ENCODE measurements at regions of chr17 and their contacts with region 1.

Region 1: DNA sequence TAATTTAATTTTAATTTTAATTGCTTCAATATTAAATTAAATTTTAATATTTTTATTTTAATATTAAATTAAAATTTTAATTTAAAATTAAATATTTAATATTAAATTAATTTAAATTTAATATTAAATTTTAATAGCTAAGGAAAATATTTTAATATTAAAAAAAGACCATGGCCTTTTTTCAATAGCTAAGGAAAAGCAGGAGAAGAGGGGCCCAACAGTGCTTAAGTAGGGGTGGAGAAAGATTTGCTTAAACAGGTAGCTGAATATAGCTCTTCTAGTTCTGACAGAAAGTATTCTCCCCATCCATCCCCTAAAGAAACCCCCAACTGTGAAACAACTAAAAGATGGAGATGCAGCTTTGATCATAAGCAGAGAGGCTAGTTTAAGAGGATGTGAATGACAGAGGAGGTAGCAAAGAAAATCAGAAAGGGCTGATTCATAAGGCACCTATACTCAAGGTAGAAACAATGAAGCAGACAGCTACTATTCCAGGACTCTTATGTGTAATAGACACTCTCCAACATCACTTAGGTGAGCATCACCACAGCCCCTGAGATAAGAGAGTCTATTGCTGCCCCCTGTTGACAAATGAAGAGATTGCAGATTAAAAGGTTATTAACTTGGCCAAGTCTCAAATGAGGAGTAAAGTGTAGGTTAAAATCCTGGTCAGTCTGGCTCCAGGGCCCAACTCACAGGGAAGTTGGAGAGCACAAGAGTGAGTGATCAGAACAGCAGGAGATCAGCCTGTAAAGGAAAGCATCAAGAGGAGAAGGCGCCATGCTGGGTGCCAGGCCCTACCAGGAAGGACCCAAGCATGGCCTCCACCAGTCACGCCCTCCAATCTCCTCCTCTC is 7.8 kb upstream of the RNASEK start:
- DNase-seq: peak; percentile 45
- H3K4me3 Mint-ChIP-seq: no peak overlapping the region
- H3K27ac Mint-ChIP-seq: no peak overlapping the region
- H3K4me1 Mint-ChIP-seq: no peaks in the 10 kb centered on the region
- H3K27me3 Mint-ChIP-seq: no peaks in the 10 kb centered on the region
- CTCF ChIP-seq: peak; percentile 42

Region 2: GRCh38 chr17:6812295-6812694 is 192.3 kb before region 1 on chr17:
- CTCF ChIA-PET with region 1: no interaction called
- intact Hi-C with region 1: no loop called
- DNase-seq: no peak
- H3K4me3 Mint-ChIP-seq: no peak overlapping the region
- H3K27ac Mint-ChIP-seq: no peak overlapping the region
- H3K4me1 Mint-ChIP-seq: no peaks in the 10 kb centered on the region
- H3K27me3 Mint-ChIP-seq: peaks cover 38% of the 10 kb centered on the region
- CTCF ChIP-seq: no peak

Region 3: DNA sequence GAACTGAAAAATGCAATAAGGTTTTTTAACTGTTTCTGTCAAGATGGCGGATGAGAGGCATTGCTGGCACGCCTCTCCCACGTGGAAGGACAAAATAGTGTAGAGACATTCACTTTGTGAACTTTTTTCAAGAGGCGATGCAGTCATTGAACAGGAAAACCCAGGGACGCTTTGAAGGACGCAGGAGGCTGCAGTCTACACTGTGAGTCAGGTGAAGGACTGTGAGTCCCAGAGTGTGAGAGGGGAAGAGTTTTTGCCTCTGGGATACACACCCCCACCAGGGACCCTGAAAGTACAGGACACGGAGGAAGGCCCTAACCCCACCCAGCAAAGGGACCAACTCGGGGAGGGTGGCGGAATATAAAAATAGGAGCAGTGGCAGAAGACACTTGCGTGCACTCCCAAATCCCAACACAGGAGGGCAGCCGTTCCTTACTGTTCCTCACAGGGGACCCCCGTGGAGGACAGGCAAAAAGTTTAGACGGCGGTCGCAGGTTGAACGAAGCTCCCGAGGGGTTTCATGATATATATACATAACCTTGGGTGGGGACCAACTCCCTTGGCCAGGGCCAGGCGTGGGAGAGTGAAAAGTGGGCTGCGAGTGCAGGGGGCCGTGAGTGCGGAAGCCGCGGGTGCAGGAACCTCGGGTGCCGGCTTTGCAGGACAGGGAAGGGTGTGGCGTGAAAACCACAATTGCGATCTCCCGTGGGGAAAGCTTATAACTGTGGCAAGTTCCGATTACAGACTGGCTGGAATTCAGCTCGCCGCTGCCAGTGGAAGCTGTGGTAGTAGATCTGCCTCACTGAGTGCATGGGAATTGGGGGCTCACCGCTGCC is 90.8 kb before region 1 on chr17:
- CTCF ChIA-PET with region 1: interaction called, 21 read pairs
- intact Hi-C with region 1: loop called (anchors 1 kb)
- DNase-seq: peak; percentile 61
- H3K4me3 Mint-ChIP-seq: peak overlapping the region; percentile 13
- H3K27ac Mint-ChIP-seq: no peak overlapping the region
- H3K4me1 Mint-ChIP-seq: peaks cover 13% of the 10 kb centered on the region
- H3K27me3 Mint-ChIP-seq: peaks cover 47% of the 10 kb centered on the region
- CTCF ChIP-seq: peak; percentile 75

Region 4: DNA sequence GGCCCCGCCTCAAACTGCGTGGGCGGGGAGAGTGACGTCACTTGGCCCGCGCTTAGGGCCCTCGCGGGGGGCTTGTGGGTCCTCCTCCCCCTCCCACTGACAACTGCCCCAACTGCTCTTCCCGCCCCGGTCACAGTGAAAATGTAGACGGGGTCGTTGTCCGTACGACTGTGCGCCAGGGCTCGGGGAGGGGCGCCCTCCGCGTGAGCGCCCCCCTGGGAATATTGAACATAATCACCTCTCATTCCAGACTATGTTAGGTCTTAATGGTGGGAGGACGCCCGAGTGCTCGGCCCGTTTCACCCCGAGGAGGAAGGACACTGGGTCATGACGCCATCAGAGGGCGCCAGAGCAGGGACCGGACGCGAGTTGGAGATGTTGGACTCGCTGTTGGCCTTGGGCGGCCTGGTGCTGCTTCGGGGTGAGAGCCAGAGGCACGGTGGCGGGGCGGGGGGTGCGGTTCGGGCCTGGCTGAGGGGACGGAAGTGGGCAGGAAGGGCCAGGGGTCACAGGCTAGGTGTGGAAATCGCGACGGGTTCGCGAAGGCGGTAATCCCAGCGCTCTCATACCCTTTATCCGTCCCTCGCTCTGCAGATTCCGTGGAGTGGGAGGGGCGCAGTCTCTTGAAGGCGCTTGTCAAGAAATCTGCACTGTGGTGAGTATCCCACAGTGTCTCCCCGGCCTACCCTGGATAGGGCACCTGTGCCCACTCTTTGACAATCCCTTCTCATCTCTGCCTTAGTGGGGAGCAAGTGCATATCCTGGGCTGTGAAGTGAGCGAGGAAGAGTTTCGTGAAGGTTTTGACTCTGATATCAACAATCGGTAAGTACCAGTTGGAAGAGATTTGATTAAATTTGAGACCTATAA is 247.8 kb after region 1 on chr17 and contains the start of gene ELP5:
- CTCF ChIA-PET with region 1: no interaction called
- intact Hi-C with region 1: no loop called
- DNase-seq: peak; percentile 89
- H3K4me3 Mint-ChIP-seq: peak within 1 kb of the TSS; percentile 73
- H3K27ac Mint-ChIP-seq: peak within 1 kb of the TSS; percentile 84
- H3K4me1 Mint-ChIP-seq: peaks cover 27% of the 10 kb centered on the region
- H3K27me3 Mint-ChIP-seq: no peaks in the 10 kb centered on the region
- CTCF ChIP-seq: no peak
- total RNA-seq, gene ELP5: 20.3 and 21.3 TPM in 2 replicates

Region 5: GRCh38 chr17:7484067-7484918 is 479.7 kb after region 1 on chr17 and contains the start of gene POLR2A:
- CTCF ChIA-PET with region 1: no interaction called
- intact Hi-C with region 1: no loop called
- DNase-seq: peak; percentile 96
- H3K4me3 Mint-ChIP-seq: peak within 1 kb of the TSS; percentile 93
- H3K27ac Mint-ChIP-seq: peak within 1 kb of the TSS; percentile 96
- H3K4me1 Mint-ChIP-seq: peaks cover 42% of the 10 kb centered on the region
- H3K27me3 Mint-ChIP-seq: no peaks in the 10 kb centered on the region
- CTCF ChIP-seq: no peak
- total RNA-seq, gene POLR2A: 89.0 and 99.3 TPM in 2 replicates

Measured in Calu3 (cell line).